Posterior vena cava (tissue), 2 donors: ENCODE measurements at regions of chr5 and their contacts with region 1.

Region 1: GRCh38 chr5:154072414-154073171 is 33.8 kb downstream of the MFAP3 start:
- DNase-seq: peak; percentile 95

Region 2: DNA sequence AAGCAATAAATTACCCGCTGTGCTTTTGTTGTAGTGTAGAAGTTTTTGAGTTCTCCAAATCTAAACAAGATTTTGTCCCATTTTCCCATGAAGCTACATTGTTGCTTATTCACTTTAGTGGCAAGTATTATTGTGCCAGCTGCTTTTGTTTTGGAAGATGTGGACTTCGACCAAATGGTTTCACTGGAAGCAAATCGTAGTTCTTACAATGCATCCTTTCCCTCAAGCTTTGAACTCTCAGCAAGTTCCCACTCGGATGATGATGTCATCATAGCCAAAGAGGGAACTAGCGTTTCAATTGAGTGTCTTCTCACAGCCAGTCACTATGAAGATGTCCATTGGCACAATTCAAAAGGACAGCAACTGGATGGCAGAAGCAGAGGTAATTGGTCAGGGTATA is 23.0 kb before region 1 on chr5:
- intact Hi-C with region 1: no loop called
- DNase-seq: no peak

Region 3: GRCh38 chr5:154110716-154111115 is 38.1 kb after region 1 on chr5:
- intact Hi-C with region 1: no loop called
- DNase-seq: no peak

Region 4: DNA sequence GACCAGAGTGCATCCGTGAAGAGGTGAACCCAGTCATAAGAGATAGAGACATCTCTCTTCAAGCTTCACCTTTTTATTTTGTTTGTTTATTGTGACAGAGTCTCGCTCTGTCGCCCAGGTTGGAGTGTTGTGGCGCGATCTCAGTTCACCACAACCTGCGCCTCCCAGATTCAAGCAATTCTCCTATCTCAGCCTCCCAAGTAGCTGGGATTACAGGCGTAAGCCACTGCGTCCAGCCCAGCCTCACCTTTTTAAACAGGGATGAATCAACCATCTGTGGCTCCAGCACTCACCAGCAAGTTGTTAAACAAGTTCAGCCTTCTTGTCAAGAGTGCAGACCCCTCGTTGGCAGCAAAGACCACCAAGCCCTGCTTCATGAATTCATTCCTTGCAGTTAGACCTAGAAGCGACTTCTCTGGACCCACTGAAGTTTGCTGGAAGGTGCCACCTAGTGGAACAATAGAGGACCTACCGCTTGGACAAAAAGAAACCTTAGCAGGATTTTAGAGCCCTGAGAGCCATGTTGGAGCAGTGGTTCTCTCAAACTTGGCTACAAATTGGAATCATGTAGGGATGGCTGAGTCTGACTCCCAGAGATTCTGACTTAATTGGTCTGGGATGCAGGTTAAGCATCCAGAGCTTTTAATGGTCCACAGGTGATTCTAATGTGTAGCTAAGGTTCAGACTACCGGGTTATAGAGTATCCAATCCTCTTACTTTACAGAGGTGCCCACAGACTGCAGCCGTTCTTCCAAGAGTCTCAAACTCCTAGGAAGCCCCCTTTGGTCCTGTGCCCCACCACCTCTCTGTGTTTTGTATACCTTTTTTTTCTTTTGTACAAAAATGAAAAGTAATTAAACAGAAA is 107.5 kb after region 1 on chr5:
- intact Hi-C with region 1: loop called (anchors 2 to 10 kb)
- DNase-seq: no peak